CD4-positive, alpha-beta memory T cell (primary cell): ENCODE measurements at regions of chr1 and their contacts with region 1.

Region 1: GRCh38 chr1:94854458-94855306 is 34.5 kb downstream of the SLC44A3 start:
- DNase-seq: peak; percentile 71 to 80 (median 78)
- H3K4me3 ChIP-seq: peak overlapping the region in 1 of 2 donors; percentile 35
- H3K4me3 Mint-ChIP-seq: no peak overlapping the region
- H3K27ac ChIP-seq: no peak overlapping the region
- H3K27ac Mint-ChIP-seq: no peak overlapping the region
- H3K4me1 ChIP-seq: no peaks in the 10 kb centered on the region
- H3K4me1 Mint-ChIP-seq: no peaks in the 10 kb centered on the region
- H3K27me3 ChIP-seq: no peaks in the 10 kb centered on the region
- H3K27me3 Mint-ChIP-seq: peaks cover 2 to 3% of the 10 kb centered on the region in 2 donors

Region 2: DNA sequence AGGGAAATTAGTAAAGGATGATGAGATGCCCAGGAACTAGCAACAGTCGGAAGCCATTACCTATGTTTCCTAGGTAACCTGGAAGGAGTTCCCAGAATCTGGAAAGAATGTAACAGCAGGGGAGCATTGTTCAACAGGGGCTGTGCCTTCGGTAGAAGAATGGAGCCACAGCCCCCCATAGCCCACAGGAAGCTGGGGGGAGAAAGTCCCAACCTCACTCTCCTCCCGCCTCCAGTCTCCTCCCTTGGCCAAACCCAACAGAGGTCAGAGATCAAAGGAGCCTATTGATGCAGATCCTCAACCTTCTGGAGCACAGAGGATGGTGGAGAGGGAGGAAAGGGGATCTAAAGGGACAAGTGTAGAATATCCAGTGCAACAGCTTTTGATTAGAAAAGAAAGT is 166.0 kb before region 1 on chr1:
- CTCF ChIA-PET with region 1: no interaction called
- POLR2A ChIA-PET with region 1: no interaction called
- intact Hi-C with region 1: no loop called
- DNase-seq: no peak
- H3K4me3 ChIP-seq: no peak overlapping the region
- H3K4me3 Mint-ChIP-seq: no peak overlapping the region
- H3K27ac ChIP-seq: no peak overlapping the region
- H3K27ac Mint-ChIP-seq: no peak overlapping the region
- H3K4me1 ChIP-seq: no peaks in the 10 kb centered on the region
- H3K4me1 Mint-ChIP-seq: no peaks in the 10 kb centered on the region
- H3K27me3 ChIP-seq: no peaks in the 10 kb centered on the region
- H3K27me3 Mint-ChIP-seq: peaks cover 10 to 11% of the 10 kb centered on the region in 2 donors

Region 3: DNA sequence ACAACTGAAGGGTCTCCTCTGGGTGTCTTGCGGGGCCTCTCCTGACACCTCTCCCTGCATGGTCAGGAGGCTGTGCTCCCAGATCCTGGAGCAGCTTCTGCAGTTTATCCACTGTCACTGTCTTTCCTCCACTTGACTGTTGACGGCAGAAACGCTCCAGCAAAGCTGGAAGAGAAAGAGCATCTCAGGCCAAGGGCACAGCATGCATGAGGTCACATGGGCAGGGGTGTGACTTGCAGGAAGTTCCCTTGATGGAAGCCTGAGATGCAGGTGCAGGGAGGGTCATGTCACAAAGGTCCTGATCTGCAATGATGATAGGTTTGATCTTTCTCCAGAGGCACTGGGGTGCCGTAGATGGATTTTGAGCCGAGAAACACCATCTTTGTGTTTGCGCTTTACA is 11.3 kb before region 1 on chr1:
- CTCF ChIA-PET with region 1: interaction called, 27 read pairs
- POLR2A ChIA-PET with region 1: no interaction called
- intact Hi-C with region 1: no loop called
- DNase-seq: no peak
- H3K4me3 ChIP-seq: no peak overlapping the region
- H3K4me3 Mint-ChIP-seq: peak overlapping the region in 2 of 8 donors; percentile 20 to 26
- H3K27ac ChIP-seq: no peak overlapping the region
- H3K27ac Mint-ChIP-seq: no peak overlapping the region
- H3K4me1 ChIP-seq: no peaks in the 10 kb centered on the region
- H3K4me1 Mint-ChIP-seq: no peaks in the 10 kb centered on the region
- H3K27me3 ChIP-seq: no peaks in the 10 kb centered on the region
- H3K27me3 Mint-ChIP-seq: peaks cover 9 to 16% of the 10 kb centered on the region in 2 donors

Region 4: GRCh38 chr1:94962409-94963265 is 108.0 kb after region 1 on chr1:
- CTCF ChIA-PET with region 1: interaction called, 10 read pairs
- POLR2A ChIA-PET with region 1: no interaction called
- intact Hi-C with region 1: no loop called
- DNase-seq: peak in 4 of 5 donors; percentile 8 to 33 (median 26)
- H3K4me3 ChIP-seq: peak overlapping the region; percentile 58 to 68
- H3K4me3 Mint-ChIP-seq: peak overlapping the region; percentile 86 to 99 (median 94)
- H3K27ac ChIP-seq: peak overlapping the region; percentile 38
- H3K27ac Mint-ChIP-seq: peak overlapping the region; percentile 24 to 97 (median 92)
- H3K4me1 ChIP-seq: peaks cover 15% of the 10 kb centered on the region
- H3K4me1 Mint-ChIP-seq: peaks cover 4 to 12% (median 6%) of the 10 kb centered on the region in 4 donors
- H3K27me3 ChIP-seq: no peaks in the 10 kb centered on the region
- H3K27me3 Mint-ChIP-seq: no peaks in the 10 kb centered on the region

Region 5: GRCh38 chr1:95061445-95062006 is 206.8 kb after region 1 on chr1:
- CTCF ChIA-PET with region 1: interaction called, 10 read pairs
- POLR2A ChIA-PET with region 1: no interaction called
- intact Hi-C with region 1: no loop called
- DNase-seq: no peak
- H3K4me3 ChIP-seq: no peak overlapping the region
- H3K4me3 Mint-ChIP-seq: no peak overlapping the region
- H3K27ac ChIP-seq: no peak overlapping the region
- H3K27ac Mint-ChIP-seq: peak overlapping the region in 3 of 7 donors; percentile 6 to 36 (median 32)
- H3K4me1 ChIP-seq: no peaks in the 10 kb centered on the region
- H3K4me1 Mint-ChIP-seq: peaks cover 0 to 1% (median 0%) of the 10 kb centered on the region in 4 donors
- H3K27me3 ChIP-seq: no peaks in the 10 kb centered on the region
- H3K27me3 Mint-ChIP-seq: no peaks in the 10 kb centered on the region

Region 6: GRCh38 chr1:95116580-95117206 is 262.0 kb after region 1 on chr1:
- CTCF ChIA-PET with region 1: no interaction called
- POLR2A ChIA-PET with region 1: no interaction called
- intact Hi-C with region 1: loop called (anchors 5 kb)
- DNase-seq: peak; percentile 39 to 61 (median 49)
- H3K4me3 ChIP-seq: peak overlapping the region; percentile 43 to 53
- H3K4me3 Mint-ChIP-seq: peak overlapping the region; percentile 90 to 93 (median 93)
- H3K27ac ChIP-seq: no peak overlapping the region
- H3K27ac Mint-ChIP-seq: peak overlapping the region in 6 of 7 donors; percentile 51 to 88 (median 80)
- H3K4me1 ChIP-seq: peaks cover 12% of the 10 kb centered on the region
- H3K4me1 Mint-ChIP-seq: peaks cover 4 to 16% (median 9%) of the 10 kb centered on the region in 4 donors
- H3K27me3 ChIP-seq: peaks cover 18% of the 10 kb centered on the region
- H3K27me3 Mint-ChIP-seq: peaks cover 17 to 33% of the 10 kb centered on the region in 2 donors